Activated CD4-positive, alpha-beta memory T cell treated with anti-CD3 and anti-CD28 coated beads for 36 hours (primary cell): ENCODE measurements at regions of chr5 and their contacts with region 1.

Region 1: DNA sequence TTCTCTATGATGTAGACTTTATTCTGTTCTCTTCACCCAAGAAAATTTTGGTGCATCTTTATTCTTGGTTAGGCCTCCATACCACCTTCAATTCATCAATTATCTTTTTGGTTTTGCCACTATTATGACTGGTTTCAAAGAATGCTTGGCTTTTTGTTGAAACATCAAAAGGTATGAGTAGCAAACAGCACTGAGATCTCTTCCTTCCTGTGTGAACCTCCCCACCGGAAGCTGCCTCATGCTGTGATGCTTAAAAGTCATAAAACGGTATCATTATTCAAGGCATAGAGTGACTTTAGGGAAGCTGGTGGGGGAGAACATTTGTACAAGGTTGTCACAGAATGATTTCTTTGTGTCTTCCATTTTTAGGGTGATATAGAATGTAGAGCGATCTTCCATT is 70.6 kb downstream of the IQGAP2 start:
- DNase-seq: peak; percentile 87
- H3K4me3 Mint-ChIP-seq: peak overlapping the region; percentile 22
- H3K27ac Mint-ChIP-seq: peak overlapping the region; percentile 82
- H3K4me1 Mint-ChIP-seq: peaks cover 85% of the 10 kb centered on the region
- H3K27me3 Mint-ChIP-seq: no peaks in the 10 kb centered on the region

Region 2: GRCh38 chr5:75072066-75072465 is 1401.6 kb before region 1 on chr5:
- CTCF ChIA-PET with region 1: no interaction called
- POLR2A ChIA-PET with region 1: no interaction called
- intact Hi-C with region 1: no loop called
- DNase-seq: no peak
- H3K4me3 Mint-ChIP-seq: no peak overlapping the region
- H3K27ac Mint-ChIP-seq: no peak overlapping the region
- H3K4me1 Mint-ChIP-seq: peaks cover 11% of the 10 kb centered on the region
- H3K27me3 Mint-ChIP-seq: no peaks in the 10 kb centered on the region

Region 3: GRCh38 chr5:76269932-76270610 is 203.6 kb before region 1 on chr5:
- CTCF ChIA-PET with region 1: no interaction called
- POLR2A ChIA-PET with region 1: no interaction called
- intact Hi-C with region 1: loop called (anchors 2 kb)
- DNase-seq: peak; percentile 67
- H3K4me3 Mint-ChIP-seq: peak overlapping the region; percentile 50
- H3K27ac Mint-ChIP-seq: peak overlapping the region; percentile 95
- H3K4me1 Mint-ChIP-seq: peaks cover 41% of the 10 kb centered on the region
- H3K27me3 Mint-ChIP-seq: peaks cover 5% of the 10 kb centered on the region

Region 4: DNA sequence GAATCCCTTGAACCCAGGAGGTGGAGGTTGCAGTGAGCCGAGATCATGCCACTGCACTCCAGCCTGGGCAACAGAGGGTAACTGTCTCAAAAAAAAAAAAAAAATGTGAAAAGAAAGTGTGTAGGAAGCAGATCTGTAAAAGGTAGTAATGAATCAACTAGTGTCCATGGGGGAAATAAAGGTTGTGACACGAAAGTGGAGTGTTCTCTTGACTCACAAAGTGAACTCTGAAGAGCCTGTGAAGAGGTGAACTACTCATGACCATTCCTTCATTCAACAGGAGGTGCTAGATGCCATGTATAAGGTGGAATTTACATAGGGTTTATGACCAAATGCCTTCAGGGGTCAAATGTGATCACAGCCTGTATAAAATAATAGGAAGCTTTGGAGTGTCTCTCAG is 57.8 kb before region 1 on chr5:
- CTCF ChIA-PET with region 1: interaction called, 5 read pairs
- POLR2A ChIA-PET with region 1: no interaction called
- intact Hi-C with region 1: loop called (anchors 2 kb)
- DNase-seq: no peak
- H3K4me3 Mint-ChIP-seq: no peak overlapping the region
- H3K27ac Mint-ChIP-seq: peak overlapping the region; percentile 55
- H3K4me1 Mint-ChIP-seq: peaks cover 61% of the 10 kb centered on the region
- H3K27me3 Mint-ChIP-seq: no peaks in the 10 kb centered on the region

Region 5: GRCh38 chr5:76521240-76521758 is 47.6 kb after region 1 on chr5:
- CTCF ChIA-PET with region 1: interaction called, 3 read pairs
- POLR2A ChIA-PET with region 1: interaction called, 4 read pairs
- intact Hi-C with region 1: loop called (anchors 1 kb)
- DNase-seq: no peak
- H3K4me3 Mint-ChIP-seq: peak overlapping the region; percentile 30
- H3K27ac Mint-ChIP-seq: peak overlapping the region; percentile 91
- H3K4me1 Mint-ChIP-seq: peaks cover 83% of the 10 kb centered on the region
- H3K27me3 Mint-ChIP-seq: no peaks in the 10 kb centered on the region

Region 6: GRCh38 chr5:76544268-76544926 is 70.7 kb after region 1 on chr5:
- CTCF ChIA-PET with region 1: interaction called, 16 read pairs
- POLR2A ChIA-PET with region 1: interaction called, 11 read pairs
- intact Hi-C with region 1: loop called (anchors 1 kb)
- DNase-seq: peak; percentile 79
- H3K4me3 Mint-ChIP-seq: peak overlapping the region; percentile 74
- H3K27ac Mint-ChIP-seq: peak overlapping the region; percentile 99
- H3K4me1 Mint-ChIP-seq: peaks cover 92% of the 10 kb centered on the region
- H3K27me3 Mint-ChIP-seq: no peaks in the 10 kb centered on the region

Region 7: DNA sequence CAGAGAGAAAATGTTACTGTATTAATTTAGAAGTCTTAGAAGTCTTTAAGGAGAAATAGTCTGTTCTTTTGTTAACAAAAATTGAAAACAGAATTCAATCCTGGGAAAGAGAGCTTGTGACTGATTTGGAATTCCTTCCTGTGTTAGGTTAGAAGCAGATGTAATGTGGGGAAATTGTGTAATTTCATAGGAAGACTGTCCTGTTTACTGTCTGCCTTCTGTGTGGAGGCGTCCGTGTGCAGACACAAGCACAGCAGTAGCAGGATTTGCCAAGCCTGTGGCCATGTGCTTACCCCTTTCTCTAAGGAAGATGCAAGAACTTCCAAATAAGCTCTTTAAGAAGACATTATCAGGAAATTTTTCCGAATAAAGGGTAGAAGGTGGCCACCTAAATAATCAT is 205.6 kb after region 1 on chr5:
- CTCF ChIA-PET with region 1: no interaction called
- POLR2A ChIA-PET with region 1: no interaction called
- intact Hi-C with region 1: no loop called
- DNase-seq: no peak
- H3K4me3 Mint-ChIP-seq: no peak overlapping the region
- H3K27ac Mint-ChIP-seq: no peak overlapping the region
- H3K4me1 Mint-ChIP-seq: peaks cover 14% of the 10 kb centered on the region
- H3K27me3 Mint-ChIP-seq: no peaks in the 10 kb centered on the region